ENCODE measurements at regions of chr12 and their contacts with region 1.

Region 1: GRCh38 chr12:16121953-16122352 is 155.5 kb downstream of the SLC15A5 start:
- DNase-seq: no peak
- ATAC-seq: no peak
- H3K4me3 Mint-ChIP-seq: no peak overlapping the region
- H3K27ac Mint-ChIP-seq: no peak overlapping the region
- H3K4me1 Mint-ChIP-seq: no peaks in the 10 kb centered on the region
- H3K27me3 Mint-ChIP-seq: peaks cover 1% of the 10 kb centered on the region

Region 2: GRCh38 chr12:15837141-15837790 is 284.7 kb before region 1 on chr12:
- POLR2A ChIA-PET with region 1: no interaction called
- DNase-seq: no peak
- ATAC-seq: no peak
- H3K4me3 Mint-ChIP-seq: no peak overlapping the region
- H3K27ac Mint-ChIP-seq: no peak overlapping the region
- H3K4me1 Mint-ChIP-seq: no peaks in the 10 kb centered on the region
- H3K27me3 Mint-ChIP-seq: peaks cover 8% of the 10 kb centered on the region

Region 3: DNA sequence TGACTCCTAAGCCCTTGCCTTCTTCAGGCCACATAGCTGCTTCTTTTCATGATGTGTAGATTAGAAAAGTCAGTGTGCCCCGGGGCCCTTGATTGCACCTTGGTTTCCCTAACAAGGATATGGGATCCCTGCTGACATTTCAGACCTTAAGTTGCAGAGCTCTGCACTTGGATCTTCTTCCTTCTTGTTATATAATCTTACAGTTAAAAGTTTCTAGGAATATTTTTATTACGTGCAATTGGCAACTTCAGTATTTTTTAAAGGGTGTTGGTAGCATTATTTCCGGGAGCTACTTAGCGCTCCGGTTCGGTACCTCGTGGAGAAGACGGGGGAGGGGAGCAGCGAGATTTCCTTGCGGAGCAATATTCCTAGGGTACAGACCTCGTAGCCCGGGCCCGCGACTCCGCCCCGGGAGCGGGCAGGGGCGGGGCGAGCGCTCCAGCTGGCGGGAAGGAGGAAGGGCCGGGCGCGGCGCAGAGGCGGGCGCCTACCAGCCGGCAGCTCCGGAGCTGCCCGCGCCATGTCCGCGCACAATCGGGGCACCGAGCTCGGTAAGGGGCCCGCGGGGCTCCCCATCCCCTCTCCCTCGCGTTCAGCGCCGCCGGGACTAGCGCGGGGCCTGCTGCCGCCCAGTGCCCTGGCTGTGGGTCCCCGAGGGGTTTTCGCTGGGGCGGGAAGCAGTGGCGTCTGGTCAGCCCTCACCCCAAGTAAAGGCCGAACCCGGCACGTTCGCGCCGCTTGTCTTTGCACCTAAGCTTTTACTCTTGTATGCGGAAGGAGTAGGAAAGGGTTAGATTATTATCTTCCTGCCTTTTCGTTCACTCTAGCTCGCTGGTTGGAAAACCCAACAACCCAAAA is 210.9 kb before region 1 on chr12 and contains the start of gene DERA:
- POLR2A ChIA-PET with region 1: no interaction called
- DNase-seq: peak; percentile 75
- ATAC-seq: peak; percentile 93
- H3K4me3 Mint-ChIP-seq: peak within 1 kb of the TSS; percentile 93
- H3K27ac Mint-ChIP-seq: peak within 1 kb of the TSS; percentile 85
- H3K4me1 Mint-ChIP-seq: peaks cover 15% of the 10 kb centered on the region
- H3K27me3 Mint-ChIP-seq: no peaks in the 10 kb centered on the region
- total RNA-seq, gene DERA: 22.5 to 23.4 TPM

Region 4: DNA sequence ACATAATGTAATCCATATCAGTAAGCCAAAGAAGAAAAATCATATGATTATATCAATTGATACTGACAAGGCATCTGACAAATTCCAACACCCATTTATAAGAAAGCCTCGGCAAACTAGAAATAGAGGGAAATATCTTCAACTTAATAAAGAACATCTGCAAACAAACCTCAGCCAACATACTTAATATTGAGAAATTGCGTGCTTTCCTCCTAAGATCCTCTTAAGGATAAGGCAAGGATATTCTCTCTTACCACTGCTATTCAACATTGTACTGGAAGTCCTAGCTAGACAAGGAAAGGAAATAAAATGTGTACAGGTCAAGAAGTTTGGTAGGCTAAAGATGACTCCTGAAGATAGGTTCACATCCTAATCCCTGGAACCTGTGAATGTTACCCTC is 95.0 kb before region 1 on chr12:
- POLR2A ChIA-PET with region 1: interaction called, 10 read pairs
- DNase-seq: no peak
- ATAC-seq: no peak
- H3K4me3 Mint-ChIP-seq: no peak overlapping the region
- H3K27ac Mint-ChIP-seq: no peak overlapping the region
- H3K4me1 Mint-ChIP-seq: no peaks in the 10 kb centered on the region
- H3K27me3 Mint-ChIP-seq: no peaks in the 10 kb centered on the region